ENCODE measurements at regions of chr15 and their contacts with region 1.

Region 1: DNA sequence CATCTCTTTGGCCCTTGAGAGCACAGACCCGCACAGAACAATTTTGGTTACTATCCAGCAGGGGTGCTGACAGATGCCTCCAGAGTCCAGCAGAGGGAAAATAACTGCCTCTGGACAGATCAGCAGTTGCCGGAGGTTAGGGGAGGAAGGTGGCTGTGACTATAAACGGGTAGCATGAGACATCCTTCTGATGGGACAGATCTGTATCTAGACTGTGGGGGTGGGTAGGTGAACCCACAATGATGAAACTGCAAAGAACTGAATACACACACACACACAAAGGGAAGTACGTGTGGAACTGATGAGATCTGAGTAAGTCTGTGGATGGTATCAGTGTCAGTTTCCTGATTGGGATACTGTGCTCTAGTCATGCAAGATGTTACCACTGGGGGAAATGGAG is 21.2 kb downstream of the ADAMTS7 start:
- DNase-seq: peak; percentile 72
- H3K4me3 Mint-ChIP-seq: no peak overlapping the region
- H3K27ac Mint-ChIP-seq: peak overlapping the region; percentile 45
- H3K4me1 Mint-ChIP-seq: peaks cover 8% of the 10 kb centered on the region
- H3K27me3 Mint-ChIP-seq: no peaks in the 10 kb centered on the region

Region 2: GRCh38 chr15:78761891-78762385 is 28.1 kb before region 1 on chr15:
- intact Hi-C with region 1: loop called (anchors 1 kb)
- DNase-seq: no peak
- H3K4me3 Mint-ChIP-seq: peak overlapping the region; percentile 35
- H3K27ac Mint-ChIP-seq: peak overlapping the region; percentile 91
- H3K4me1 Mint-ChIP-seq: peaks cover 20% of the 10 kb centered on the region
- H3K27me3 Mint-ChIP-seq: no peaks in the 10 kb centered on the region

Measured in activated CD4-positive, alpha-beta T cell treated with anti-CD3 and anti-CD28 coated beads, Interleukin-2, amount 10 ng/mL, durations not matched to agents 24 days and 14 days (primary cell).